H1 (cell line): ENCODE measurements at regions of chr3 and their contacts with region 1.

Region 1: GRCh38 chr3:179929091-179929529 is 107.6 kb downstream of the PEX5L start:
- DNase-seq: peak in 1 of 2 experiments; percentile 71
- H3K4me3 ChIP-seq: no peak overlapping the region
- H3K27ac ChIP-seq: no peak overlapping the region
- H3K4me1 ChIP-seq: peaks cover 0 to 3% (median 0%) of the 10 kb centered on the region in 4 experiments; a peak in 1 of 7 replicates
- H3K27me3 ChIP-seq: no peaks in the 10 kb centered on the region; a peak in 1 of 7 replicates
- CTCF ChIP-seq: peak; percentile 8 to 67 (median 63)
- EP300 ChIP-seq: no peak
- POLR2A ChIP-seq: no peak
- RAD21 ChIP-seq: peak; percentile 72 to 79

Region 2: DNA sequence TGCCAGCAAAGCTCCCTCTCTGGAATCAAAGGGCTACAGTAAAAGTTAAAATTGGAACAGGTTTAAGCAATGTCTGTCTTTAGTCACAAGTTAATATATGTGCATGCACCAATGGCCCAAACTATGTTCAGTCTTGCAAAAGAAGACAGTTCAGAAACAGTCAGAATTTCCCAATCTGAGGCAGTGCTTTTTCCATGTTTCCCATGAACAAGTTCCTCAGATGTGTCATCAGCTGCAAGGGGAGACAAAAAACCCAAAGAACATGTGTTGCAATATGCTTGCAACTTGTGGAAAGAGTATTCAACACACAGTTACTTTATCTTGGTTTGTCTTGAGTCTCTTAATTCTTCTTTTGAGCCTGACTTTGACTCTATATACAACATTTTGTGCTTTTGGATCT is 127.8 kb before region 1 on chr3:
- CTCF ChIA-PET with region 1: no interaction called
- POLR2A ChIA-PET with region 1: no interaction called
- DNase-seq: no peak
- H3K4me3 ChIP-seq: no peak overlapping the region
- H3K27ac ChIP-seq: no peak overlapping the region
- H3K4me1 ChIP-seq: no peaks in the 10 kb centered on the region
- H3K27me3 ChIP-seq: no peaks in the 10 kb centered on the region
- CTCF ChIP-seq: no peak
- EP300 ChIP-seq: no peak
- POLR2A ChIP-seq: no peak
- RAD21 ChIP-seq: no peak

Region 3: DNA sequence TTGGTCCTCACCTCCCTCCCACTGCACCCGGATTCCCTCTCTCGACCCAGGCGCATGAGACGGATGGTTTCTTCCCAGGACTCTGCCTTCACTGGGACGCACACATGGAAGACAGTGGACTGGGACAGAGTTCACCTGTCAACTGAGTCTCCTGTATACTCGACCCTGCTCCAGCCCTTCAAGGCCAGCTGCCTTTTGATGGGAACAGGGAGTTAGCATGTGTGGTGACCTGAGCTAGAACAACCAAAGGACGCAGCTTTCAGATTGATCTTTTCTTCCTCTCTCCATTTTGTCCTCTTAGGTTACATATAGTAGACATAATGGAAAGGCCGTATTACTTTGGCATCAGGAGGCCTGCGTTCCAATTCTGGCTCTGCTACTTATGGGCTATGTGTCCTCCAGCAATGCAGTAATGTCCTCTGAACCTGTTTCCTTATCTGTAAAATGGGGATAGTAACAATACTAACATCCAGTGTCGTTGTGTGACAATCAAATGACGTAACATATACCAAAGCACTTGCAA is 13.5 kb after region 1 on chr3:
- CTCF ChIA-PET with region 1: interaction called, 20 read pairs
- POLR2A ChIA-PET with region 1: no interaction called
- DNase-seq: no peak
- H3K4me3 ChIP-seq: peak overlapping the region in 2 of 4 experiments; percentile 7 to 51; a peak in 4 of 8 replicates
- H3K27ac ChIP-seq: no peak overlapping the region
- H3K4me1 ChIP-seq: peaks cover 0 to 4% (median 0%) of the 10 kb centered on the region in 4 experiments; a peak in 2 of 7 replicates
- H3K27me3 ChIP-seq: no peaks in the 10 kb centered on the region
- CTCF ChIP-seq: no peak
- EP300 ChIP-seq: no peak
- POLR2A ChIP-seq: no peak
- RAD21 ChIP-seq: no peak

Region 4: DNA sequence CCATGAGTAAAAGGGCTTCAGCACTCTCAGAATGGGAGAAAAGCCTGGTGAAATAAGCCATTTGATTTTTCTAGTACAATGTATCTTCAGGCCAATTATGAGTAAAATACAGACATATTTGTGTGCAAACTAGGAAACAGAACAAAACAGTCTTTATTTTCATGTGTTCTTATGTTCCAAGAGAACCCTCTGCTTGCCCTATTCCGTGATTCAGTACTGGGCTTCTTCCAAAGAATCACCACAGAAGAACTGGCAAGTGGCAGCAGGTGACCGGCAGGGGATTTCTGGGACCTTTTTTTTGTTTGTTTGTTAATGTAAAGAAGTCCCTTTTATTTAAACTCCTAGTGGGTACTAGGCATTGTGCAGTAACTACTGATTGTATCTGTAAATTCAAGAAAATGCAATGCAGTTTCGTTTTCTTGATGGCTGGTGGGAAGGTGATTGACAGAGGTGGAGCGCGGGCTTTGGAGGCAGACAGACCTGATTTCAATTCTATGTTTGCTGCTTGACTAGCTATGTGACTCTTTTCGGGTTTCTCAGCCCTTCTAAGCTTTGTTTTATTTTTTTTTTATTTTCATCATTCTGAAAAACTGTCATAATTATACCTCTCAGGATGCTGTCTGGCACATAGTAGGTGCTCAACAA is 25.2 kb after region 1 on chr3:
- CTCF ChIA-PET with region 1: interaction called, 11 read pairs
- POLR2A ChIA-PET with region 1: no interaction called
- DNase-seq: no peak
- H3K4me3 ChIP-seq: no peak overlapping the region
- H3K27ac ChIP-seq: no peak overlapping the region
- H3K4me1 ChIP-seq: peaks cover 4 to 12% (median 7%) of the 10 kb centered on the region in 4 experiments; a peak in 6 of 7 replicates
- H3K27me3 ChIP-seq: no peaks in the 10 kb centered on the region
- CTCF ChIP-seq: no peak
- EP300 ChIP-seq: no peak
- POLR2A ChIP-seq: no peak
- RAD21 ChIP-seq: no peak

Region 5: DNA sequence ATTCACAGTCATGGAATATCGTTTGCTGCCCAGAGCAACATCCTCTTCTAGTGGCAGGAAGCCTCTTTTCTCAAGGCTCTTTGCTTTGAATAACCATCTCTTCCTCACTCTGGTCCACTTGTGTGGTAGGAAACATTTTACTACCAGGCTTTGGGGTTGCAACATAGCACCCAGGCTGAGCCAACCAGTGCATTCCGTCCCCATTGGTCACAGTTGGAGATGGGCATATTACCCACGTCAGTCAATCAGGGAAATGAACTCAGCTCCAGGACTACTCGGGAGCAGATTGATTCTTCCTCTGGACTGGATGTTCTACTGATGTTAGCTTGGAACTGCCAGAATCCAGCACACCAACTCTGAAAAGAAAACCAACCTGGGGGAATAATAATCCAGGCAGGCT is 111.9 kb after region 1 on chr3:
- CTCF ChIA-PET with region 1: interaction called, 10 read pairs
- POLR2A ChIA-PET with region 1: no interaction called
- DNase-seq: no peak
- H3K4me3 ChIP-seq: no peak overlapping the region
- H3K27ac ChIP-seq: no peak overlapping the region
- H3K4me1 ChIP-seq: peaks cover 0 to 3% (median 0%) of the 10 kb centered on the region in 4 experiments; a peak in 1 of 7 replicates
- H3K27me3 ChIP-seq: peaks cover 0 to 3% (median 1%) of the 10 kb centered on the region in 4 experiments; a peak in 1 of 7 replicates
- CTCF ChIP-seq: no peak
- EP300 ChIP-seq: no peak
- POLR2A ChIP-seq: no peak
- RAD21 ChIP-seq: no peak

Region 6: DNA sequence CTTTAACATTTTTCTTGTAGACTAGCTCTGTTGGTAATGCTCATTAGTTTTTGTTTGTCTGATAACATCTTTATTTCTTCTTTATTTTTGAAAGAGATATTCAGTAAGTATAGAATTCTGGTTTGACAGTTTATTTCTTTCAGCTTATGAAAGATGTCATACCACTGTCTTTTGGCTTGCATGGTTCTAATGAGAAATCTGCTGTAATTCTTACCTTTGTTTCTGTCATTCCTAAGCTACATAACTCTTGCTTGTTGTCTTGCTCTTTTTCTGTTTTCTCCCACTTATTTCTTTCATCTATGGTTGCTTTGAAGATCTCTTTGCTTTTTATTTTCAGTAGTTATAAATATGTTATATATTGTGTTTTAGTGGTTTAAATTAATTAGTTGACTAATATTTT is 194.8 kb after region 1 on chr3:
- CTCF ChIA-PET with region 1: no interaction called
- POLR2A ChIA-PET with region 1: no interaction called
- DNase-seq: no peak
- H3K4me3 ChIP-seq: no peak overlapping the region
- H3K27ac ChIP-seq: no peak overlapping the region
- H3K4me1 ChIP-seq: no peaks in the 10 kb centered on the region
- H3K27me3 ChIP-seq: no peaks in the 10 kb centered on the region
- CTCF ChIP-seq: no peak
- EP300 ChIP-seq: no peak
- POLR2A ChIP-seq: no peak
- RAD21 ChIP-seq: no peak